K562 (cell line): ENCODE measurements at regions of chr10 and their contacts with region 1.

Region 1: GRCh38 chr10:77165445-77166208 is 472.0 kb downstream of the KCNMA1 start:
- DNase-seq: peak; percentile 49 to 69 (median 56)
- ATAC-seq: peak; percentile 94
- H3K4me3 ChIP-seq: no peak overlapping the region
- H3K27ac ChIP-seq: no peak overlapping the region
- H3K4me1 ChIP-seq: no peaks in the 10 kb centered on the region
- H3K27me3 ChIP-seq: no peaks in the 10 kb centered on the region
- CTCF ChIP-seq: peak; percentile 75 to 85 (median 80)
- EP300 ChIP-seq: no peak
- POLR2A ChIP-seq: no peak
- RAD21 ChIP-seq: peak; percentile 57 to 79

Region 2: GRCh38 chr10:77391605-77392235 is 226.1 kb after region 1 on chr10:
- CTCF ChIA-PET with region 1: no interaction called
- POLR2A ChIA-PET with region 1: no interaction called
- in situ Hi-C with region 1: no loop called
- intact Hi-C with region 1: loop called (anchors 10 kb)
- DNase-seq: peak; percentile 69 to 82 (median 78)
- ATAC-seq: peak; percentile 91
- H3K4me3 ChIP-seq: no peak overlapping the region
- H3K27ac ChIP-seq: no peak overlapping the region
- H3K4me1 ChIP-seq: no peaks in the 10 kb centered on the region
- H3K27me3 ChIP-seq: peaks cover 0 to 2% of the 10 kb centered on the region in 2 experiments; a peak in 1 of 5 replicates
- CTCF ChIP-seq: peak; percentile 67 to 78 (median 72)
- EP300 ChIP-seq: no peak
- POLR2A ChIP-seq: no peak
- RAD21 ChIP-seq: peak; percentile 46 to 70